SK-N-SH (cell line): ENCODE measurements at regions of chr3 and their contacts with region 1.

Region 1: GRCh38 chr3:76369178-76369577 is 583.8 kb upstream of the ZNF717 start:
- DNase-seq: no peak
- H3K4me3 ChIP-seq: no peak overlapping the region
- H3K27ac ChIP-seq: no peak overlapping the region
- H3K4me1 ChIP-seq: no peaks in the 10 kb centered on the region
- H3K27me3 ChIP-seq: no peaks in the 10 kb centered on the region
- CTCF ChIP-seq: peak; percentile 57
- EP300 ChIP-seq: no peak
- RAD21 ChIP-seq: peak; percentile 48

Region 2: GRCh38 chr3:76570436-76571057 is 201.4 kb after region 1 on chr3:
- CTCF ChIA-PET with region 1: interaction called, 10 read pairs
- POLR2A ChIA-PET with region 1: no interaction called
- DNase-seq: peak; percentile 20
- H3K4me3 ChIP-seq: no peak overlapping the region; a peak in 1 of 4 replicates
- H3K27ac ChIP-seq: no peak overlapping the region
- H3K4me1 ChIP-seq: no peaks in the 10 kb centered on the region; a peak in 1 of 4 replicates
- H3K27me3 ChIP-seq: no peaks in the 10 kb centered on the region
- CTCF ChIP-seq: peak; percentile 89
- EP300 ChIP-seq: no peak
- RAD21 ChIP-seq: peak; percentile 76